Calu3 (cell line): ENCODE measurements at regions of chr19 and their contacts with region 1.

Region 1: GRCh38 chr19:41795031-41795461 is 1.3 kb upstream of the CEACAM3 start:
- DNase-seq: peak; percentile 76
- H3K4me3 Mint-ChIP-seq: no peak overlapping the region
- H3K27ac Mint-ChIP-seq: no peak overlapping the region
- H3K4me1 Mint-ChIP-seq: peaks cover 37% of the 10 kb centered on the region
- H3K27me3 Mint-ChIP-seq: peaks cover 31% of the 10 kb centered on the region
- CTCF ChIP-seq: peak; percentile 98

Region 2: DNA sequence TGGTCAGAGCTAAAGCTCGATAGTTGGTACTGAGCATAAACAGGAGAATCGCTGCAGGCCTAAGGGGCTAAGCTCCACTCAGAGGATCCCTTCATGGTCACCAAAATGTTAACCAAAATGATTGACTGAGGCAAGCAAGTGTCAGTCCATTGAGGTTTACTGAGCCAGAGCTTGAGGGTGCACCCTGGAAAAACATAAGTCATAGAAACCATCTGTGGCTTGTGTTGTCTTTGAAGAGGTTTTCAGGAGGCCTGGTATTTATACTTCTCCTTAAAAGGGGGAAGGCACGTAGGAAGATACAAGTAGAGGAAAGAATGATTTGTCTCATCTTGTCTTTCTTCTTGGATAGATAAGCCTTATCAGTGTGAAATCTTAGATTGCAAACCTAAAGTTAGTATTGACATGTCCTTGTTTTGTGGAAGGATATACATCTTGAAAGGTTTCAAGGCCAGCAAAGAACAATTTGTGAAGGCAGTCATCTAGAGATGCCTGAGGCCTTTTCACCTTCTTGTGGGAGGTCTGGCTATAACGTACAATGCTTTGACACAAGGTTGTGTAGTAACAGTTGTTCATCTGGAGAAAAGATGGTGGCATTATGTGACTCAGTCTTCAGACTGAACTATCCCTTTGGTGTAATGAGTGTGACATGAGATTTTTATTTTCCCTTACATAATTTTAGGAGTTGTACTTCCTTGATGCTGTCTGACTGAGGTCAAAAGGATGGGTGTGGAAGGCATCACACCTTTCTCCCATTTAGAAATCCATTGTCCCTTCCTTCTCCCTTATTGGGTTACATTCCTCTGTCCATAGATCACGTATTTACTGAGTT is 54.4 kb before region 1 on chr19:
- CTCF ChIA-PET with region 1: no interaction called
- intact Hi-C with region 1: no loop called
- DNase-seq: no peak
- H3K4me3 Mint-ChIP-seq: no peak overlapping the region
- H3K27ac Mint-ChIP-seq: no peak overlapping the region
- H3K4me1 Mint-ChIP-seq: peaks cover 19% of the 10 kb centered on the region
- H3K27me3 Mint-ChIP-seq: peaks cover 7% of the 10 kb centered on the region
- CTCF ChIP-seq: no peak

Region 3: DNA sequence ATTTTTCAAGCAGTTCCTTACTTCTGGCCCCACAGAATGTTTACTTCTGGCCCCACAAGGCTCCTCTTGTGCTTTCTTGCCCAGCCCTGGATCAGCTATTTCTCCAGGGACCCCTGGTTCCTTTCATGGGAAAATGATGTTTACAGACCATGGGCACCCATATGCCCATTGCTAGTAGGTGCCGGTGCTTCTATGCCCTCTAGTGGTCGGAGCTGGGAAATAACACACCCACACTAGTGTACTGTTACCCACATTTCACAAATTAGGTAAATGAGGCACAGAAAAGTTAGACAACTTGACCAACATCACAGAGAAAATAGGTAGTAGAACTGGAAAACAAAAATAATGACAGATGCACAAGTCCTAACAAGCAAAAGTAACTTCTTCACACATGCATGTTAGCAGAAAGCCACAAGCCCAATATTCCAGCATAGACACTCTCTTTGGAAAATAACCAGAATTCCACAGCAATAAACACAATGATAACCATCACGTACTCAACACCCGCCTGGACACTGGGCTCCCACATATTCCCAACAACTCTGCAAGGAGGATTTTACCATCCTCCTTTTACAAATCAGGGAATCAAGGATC is 41.0 kb before region 1 on chr19:
- CTCF ChIA-PET with region 1: interaction called, 50 read pairs
- intact Hi-C with region 1: no loop called
- DNase-seq: peak; percentile 76
- H3K4me3 Mint-ChIP-seq: no peak overlapping the region
- H3K27ac Mint-ChIP-seq: peak overlapping the region; percentile 19
- H3K4me1 Mint-ChIP-seq: peaks cover 71% of the 10 kb centered on the region
- H3K27me3 Mint-ChIP-seq: peaks cover 1% of the 10 kb centered on the region
- CTCF ChIP-seq: peak; percentile 56

Region 4: GRCh38 chr19:41775360-41775695 is 19.7 kb before region 1 on chr19:
- CTCF ChIA-PET with region 1: interaction called, 14 read pairs
- intact Hi-C with region 1: no loop called
- DNase-seq: peak; percentile 32
- H3K4me3 Mint-ChIP-seq: peak overlapping the region; percentile 50
- H3K27ac Mint-ChIP-seq: peak overlapping the region; percentile 99
- H3K4me1 Mint-ChIP-seq: peaks cover 91% of the 10 kb centered on the region
- H3K27me3 Mint-ChIP-seq: no peaks in the 10 kb centered on the region
- CTCF ChIP-seq: no peak

Region 5: GRCh38 chr19:41821003-41821735 is 26.1 kb after region 1 on chr19:
- CTCF ChIA-PET with region 1: interaction called, 36 read pairs
- intact Hi-C with region 1: loop called (anchors 1 kb)
- DNase-seq: peak; percentile 82
- H3K4me3 Mint-ChIP-seq: no peak overlapping the region
- H3K27ac Mint-ChIP-seq: no peak overlapping the region
- H3K4me1 Mint-ChIP-seq: no peaks in the 10 kb centered on the region
- H3K27me3 Mint-ChIP-seq: peaks cover 70% of the 10 kb centered on the region
- CTCF ChIP-seq: peak; percentile 79

Region 6: DNA sequence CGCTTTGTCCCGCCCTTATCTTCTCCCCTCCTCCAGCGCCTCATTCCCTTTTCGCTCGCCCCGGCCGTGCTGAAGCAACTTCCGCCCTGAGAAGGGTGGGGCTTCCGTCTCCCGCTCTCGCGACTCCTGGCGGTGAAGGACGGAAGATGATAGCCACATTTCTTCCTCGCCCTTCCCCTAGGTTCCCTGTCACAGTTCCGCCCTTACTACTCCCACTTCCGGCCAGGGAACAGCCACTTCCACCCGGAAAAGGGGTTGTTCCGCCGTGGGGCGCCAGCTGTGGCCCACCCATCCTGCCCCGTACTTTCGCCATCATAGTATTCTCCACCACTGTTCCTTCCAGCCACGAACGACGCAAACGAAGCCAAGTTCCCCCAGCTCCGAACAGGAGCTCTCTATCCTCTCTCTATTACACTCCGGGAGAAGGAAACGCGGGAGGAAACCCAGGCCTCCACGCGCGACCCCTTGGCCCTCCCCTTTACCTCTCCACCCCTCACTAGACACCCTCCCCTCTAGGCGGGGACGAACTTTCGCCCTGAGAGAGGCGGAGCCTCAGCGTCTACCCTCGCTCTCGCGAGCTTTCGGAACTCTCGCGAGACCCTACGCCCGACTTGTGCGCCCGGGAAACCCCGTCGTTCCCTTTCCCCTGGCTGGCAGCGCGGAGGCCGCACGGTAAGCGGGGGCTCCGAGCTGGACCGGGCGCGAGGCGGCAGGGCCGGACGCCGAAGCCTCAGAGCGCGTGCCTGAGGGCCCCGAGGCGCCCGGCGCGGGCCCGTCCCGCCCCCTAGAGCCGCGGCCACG is 64.8 kb after region 1 on chr19 and contains the start of gene RPS19:
- CTCF ChIA-PET with region 1: interaction called, 10 read pairs
- intact Hi-C with region 1: no loop called
- DNase-seq: peak; percentile 98
- H3K4me3 Mint-ChIP-seq: peak within 1 kb of the TSS; percentile 80
- H3K27ac Mint-ChIP-seq: peak within 1 kb of the TSS; percentile 86
- H3K4me1 Mint-ChIP-seq: peaks cover 34% of the 10 kb centered on the region
- H3K27me3 Mint-ChIP-seq: peaks cover 8% of the 10 kb centered on the region
- CTCF ChIP-seq: peak; percentile 87
- total RNA-seq, gene RPS19: 2,051 and 2,220 TPM in 2 replicates

Region 7: GRCh38 chr19:41959056-41960053 is 164.3 kb after region 1 on chr19 and contains the start of gene RABAC1:
- CTCF ChIA-PET with region 1: interaction called, 9 read pairs
- intact Hi-C with region 1: loop called (anchors 10 kb)
- DNase-seq: peak; percentile 93
- H3K4me3 Mint-ChIP-seq: peak within 1 kb of the TSS; percentile 80
- H3K27ac Mint-ChIP-seq: peak within 1 kb of the TSS; percentile 68
- H3K4me1 Mint-ChIP-seq: peaks cover 23% of the 10 kb centered on the region
- H3K27me3 Mint-ChIP-seq: no peaks in the 10 kb centered on the region
- CTCF ChIP-seq: no peak
- total RNA-seq, gene RABAC1: 116 and 126 TPM in 2 replicates